ENCODE measurements at regions of chr3 and their contacts with region 1.

Region 1: GRCh38 chr3:5221701-5222100 is 34.2 kb downstream of the EDEM1 start:
- DNase-seq: no peak
- ATAC-seq: no peak
- H3K4me3 ChIP-seq: no peak overlapping the region
- H3K27ac ChIP-seq: no peak overlapping the region
- H3K4me1 ChIP-seq: peaks cover 0 to 7% (median 0%) of the 10 kb centered on the region in 9 donors
- H3K27me3 ChIP-seq: no peaks in the 10 kb centered on the region
- CTCF ChIP-seq: no peak

Region 2: DNA sequence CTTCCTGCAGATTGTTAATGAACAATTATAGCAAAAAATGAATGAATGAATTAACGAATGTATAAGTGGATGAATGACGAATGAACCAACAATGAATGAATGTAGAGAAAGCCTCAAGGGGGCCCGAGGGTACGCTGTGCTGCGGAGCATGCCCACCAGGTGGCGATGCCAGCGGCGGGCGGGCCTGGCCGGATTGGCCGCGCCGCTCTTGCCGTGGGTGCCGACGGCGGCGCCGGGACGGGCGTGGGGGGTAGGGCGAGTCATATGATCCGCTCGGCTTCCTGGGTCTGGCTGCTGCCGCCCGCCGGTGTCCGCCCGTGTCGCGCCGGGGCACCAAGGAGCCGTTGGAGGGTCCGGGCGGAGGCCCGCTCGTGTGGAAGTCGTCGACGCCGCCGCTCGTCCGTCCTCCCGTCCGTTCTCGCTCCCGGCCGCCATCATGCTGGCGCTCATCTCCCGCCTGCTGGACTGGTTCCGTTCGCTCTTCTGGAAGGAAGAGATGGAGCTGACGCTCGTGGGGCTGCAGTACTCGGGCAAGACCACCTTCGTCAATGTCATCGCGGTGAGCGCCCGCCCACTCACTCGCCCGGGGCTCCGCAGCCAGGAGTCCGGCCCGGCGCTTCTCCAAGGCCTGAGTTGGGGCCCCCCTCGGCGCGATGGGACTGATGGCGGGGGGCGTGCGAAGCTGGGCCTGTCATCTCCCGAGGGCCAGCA is 99.5 kb before region 1 on chr3 and contains the start of gene ARL8B:
- intact Hi-C with region 1: no loop called
- DNase-seq: peak; percentile 91 to 92
- ATAC-seq: peak; percentile 98 to 99 (median 99)
- H3K4me3 ChIP-seq: peak within 1 kb of the TSS; percentile 79 to 100 (median 98)
- H3K27ac ChIP-seq: peak within 1 kb of the TSS; percentile 57 to 97 (median 92)
- H3K4me1 ChIP-seq: peaks cover 0 to 49% (median 44%) of the 10 kb centered on the region in 9 donors
- H3K27me3 ChIP-seq: no peaks in the 10 kb centered on the region
- CTCF ChIP-seq: peak; percentile 94 to 99 (median 97)
- total RNA-seq, gene ARL8B: 56.1 to 74.1 (median 66.8) TPM

Region 3: GRCh38 chr3:5138214-5138981 is 83.3 kb before region 1 on chr3:
- intact Hi-C with region 1: no loop called
- DNase-seq: no peak
- ATAC-seq: peak in 3 of 8 donors; percentile 30 to 51 (median 39)
- H3K4me3 ChIP-seq: no peak overlapping the region
- H3K27ac ChIP-seq: peak overlapping the region in 2 of 10 donors; percentile 22 to 71
- H3K4me1 ChIP-seq: peaks cover 4 to 82% (median 59%) of the 10 kb centered on the region in 9 donors
- H3K27me3 ChIP-seq: no peaks in the 10 kb centered on the region
- CTCF ChIP-seq: no peak

Region 4: GRCh38 chr3:5153074-5153473 is 68.6 kb before region 1 on chr3:
- intact Hi-C with region 1: loop called in 1 of 10 experiments (anchors 2 kb)
- DNase-seq: no peak
- ATAC-seq: no peak
- H3K4me3 ChIP-seq: no peak overlapping the region
- H3K27ac ChIP-seq: no peak overlapping the region
- H3K4me1 ChIP-seq: peaks cover 0 to 40% (median 11%) of the 10 kb centered on the region in 9 donors
- H3K27me3 ChIP-seq: no peaks in the 10 kb centered on the region
- CTCF ChIP-seq: no peak

Region 5: DNA sequence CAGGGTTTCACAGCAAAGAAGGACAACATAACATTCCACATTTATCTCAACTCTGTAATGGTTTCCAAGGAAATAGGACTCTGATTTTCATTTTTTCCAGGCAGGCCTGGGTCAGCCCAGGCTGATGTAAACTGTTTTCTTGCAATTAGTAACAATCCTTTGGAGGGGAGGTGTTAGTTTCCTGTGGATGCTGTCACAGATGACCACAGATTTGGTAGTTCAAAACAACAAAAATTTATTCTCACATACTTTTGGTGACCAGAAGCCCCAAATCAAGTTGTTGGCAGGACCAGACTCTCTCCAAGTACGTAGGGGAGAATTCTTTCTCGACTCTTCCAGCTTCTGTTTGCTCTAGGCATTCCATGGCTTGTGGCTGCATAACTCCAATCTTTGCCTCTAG is 53.8 kb after region 1 on chr3:
- intact Hi-C with region 1: no loop called
- DNase-seq: no peak
- ATAC-seq: peak in 2 of 8 donors; percentile 28 to 37
- H3K4me3 ChIP-seq: no peak overlapping the region
- H3K27ac ChIP-seq: no peak overlapping the region
- H3K4me1 ChIP-seq: no peaks in the 10 kb centered on the region
- H3K27me3 ChIP-seq: no peaks in the 10 kb centered on the region
- CTCF ChIP-seq: no peak